CD8-positive, alpha-beta T cell (primary cell): ENCODE measurements at regions of chr1 and their contacts with region 1.

Region 1: DNA sequence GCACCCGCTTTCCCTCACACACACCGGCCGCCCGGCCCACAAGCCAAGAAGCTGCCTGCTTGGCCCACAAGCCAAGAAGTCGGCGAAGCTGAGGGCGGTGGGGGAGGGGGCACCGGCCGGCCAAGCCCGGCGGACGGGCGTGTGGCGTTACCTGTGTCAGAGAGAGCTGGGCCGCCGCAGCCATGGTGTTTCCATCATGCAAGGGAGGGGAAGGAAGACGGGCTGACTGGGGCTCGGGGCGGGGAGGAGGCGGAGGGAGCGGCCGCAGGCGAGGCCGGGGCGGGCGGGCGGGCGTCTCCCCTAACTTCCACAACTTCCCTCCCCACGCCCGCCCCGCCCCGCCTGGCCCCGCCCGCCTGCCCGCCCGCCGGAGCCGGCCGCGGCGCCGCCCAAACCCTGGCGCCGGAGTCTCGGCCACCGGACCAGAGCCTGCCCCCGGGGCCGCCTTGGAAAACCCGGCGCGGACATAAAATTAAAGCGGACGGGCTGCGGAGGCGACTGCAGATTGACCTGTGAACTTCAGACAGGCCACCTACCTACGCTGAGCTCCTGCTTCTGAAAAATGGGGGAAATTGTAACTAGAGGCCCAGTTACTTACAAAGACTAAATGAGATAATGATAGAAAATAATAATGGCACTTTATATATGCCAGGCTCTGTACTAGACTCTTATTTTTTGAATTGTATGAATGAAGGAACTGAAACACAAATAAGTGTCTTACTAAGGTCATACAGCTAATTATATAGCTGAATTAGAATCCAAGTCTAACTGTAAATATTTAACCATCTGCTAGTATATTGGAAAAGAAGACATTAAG is at the start of gene EPS15:
- DNase-seq: peak; percentile 70 to 90 (median 83)
- ATAC-seq: peak; percentile 65
- H3K4me3 ChIP-seq: peak within 1 kb of the TSS; percentile 76 to 82
- H3K4me3 Mint-ChIP-seq: peak within 1 kb of the TSS; percentile 94
- H3K27ac ChIP-seq: peak within 1 kb of the TSS; percentile 47 to 81
- H3K27ac Mint-ChIP-seq: peak within 1 kb of the TSS; percentile 93
- H3K4me1 ChIP-seq: peaks cover 38% of the 10 kb centered on the region
- H3K4me1 Mint-ChIP-seq: peaks cover 57% of the 10 kb centered on the region
- H3K27me3 ChIP-seq: no peaks in the 10 kb centered on the region
- H3K27me3 Mint-ChIP-seq: no peaks in the 10 kb centered on the region
- CTCF ChIP-seq: no peak
- total RNA-seq, gene EPS15: 49.9 to 52.2 TPM

Region 2: GRCh38 chr1:51235673-51236530 is 283.4 kb before region 1 on chr1 and contains the start of gene RNF11:
- CTCF ChIA-PET with region 1: no interaction called
- POLR2A ChIA-PET with region 1: no interaction called
- intact Hi-C with region 1: loop called (anchors 5 to 10 kb)
- DNase-seq: peak; percentile 86 to 97 (median 91)
- ATAC-seq: peak; percentile 92
- H3K4me3 ChIP-seq: peak within 1 kb of the TSS; percentile 79 to 90
- H3K4me3 Mint-ChIP-seq: peak within 1 kb of the TSS; percentile 98
- H3K27ac ChIP-seq: peak within 1 kb of the TSS; percentile 80 to 92
- H3K27ac Mint-ChIP-seq: peak within 1 kb of the TSS; percentile 99
- H3K4me1 ChIP-seq: peaks cover 37% of the 10 kb centered on the region
- H3K4me1 Mint-ChIP-seq: peaks cover 33% of the 10 kb centered on the region
- H3K27me3 ChIP-seq: no peaks in the 10 kb centered on the region
- H3K27me3 Mint-ChIP-seq: no peaks in the 10 kb centered on the region
- CTCF ChIP-seq: no peak
- total RNA-seq, gene RNF11: 95.9 to 103 TPM

Region 3: DNA sequence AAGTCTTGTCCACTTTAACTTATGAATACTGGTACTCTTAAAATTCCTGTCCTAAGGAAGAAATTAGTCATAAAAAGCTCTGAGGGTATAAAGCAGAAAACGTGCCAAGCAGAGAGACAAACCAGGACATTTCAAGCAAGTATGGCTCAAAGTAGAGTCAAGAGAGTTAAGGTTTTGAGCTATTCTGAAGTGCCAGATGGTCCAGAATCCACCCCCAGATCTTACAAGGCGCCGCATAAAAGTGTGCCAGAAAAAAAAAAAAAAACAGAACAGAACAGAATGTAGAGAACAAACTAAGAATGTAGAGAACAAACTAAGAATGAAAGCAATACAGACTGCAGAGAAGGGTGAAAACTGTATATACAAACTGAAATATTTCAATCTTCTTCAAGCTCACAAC is 12.7 kb before region 1 on chr1:
- CTCF ChIA-PET with region 1: no interaction called
- POLR2A ChIA-PET with region 1: interaction called, 3 read pairs
- intact Hi-C with region 1: loop called in 1 of 2 experiments (anchors 2 kb)
- DNase-seq: peak in 1 of 9 experiments; percentile 35
- ATAC-seq: peak; percentile 49
- H3K4me3 ChIP-seq: no peak overlapping the region
- H3K4me3 Mint-ChIP-seq: no peak overlapping the region
- H3K27ac ChIP-seq: no peak overlapping the region
- H3K27ac Mint-ChIP-seq: no peak overlapping the region
- H3K4me1 ChIP-seq: peaks cover 15% of the 10 kb centered on the region
- H3K4me1 Mint-ChIP-seq: peaks cover 58% of the 10 kb centered on the region
- H3K27me3 ChIP-seq: no peaks in the 10 kb centered on the region
- H3K27me3 Mint-ChIP-seq: no peaks in the 10 kb centered on the region
- CTCF ChIP-seq: no peak

Region 4: GRCh38 chr1:51616901-51617708 is 97.8 kb after region 1 on chr1 and contains the start of gene OSBPL9:
- CTCF ChIA-PET with region 1: no interaction called
- POLR2A ChIA-PET with region 1: no interaction called
- intact Hi-C with region 1: loop called (anchors 1 to 2 kb)
- DNase-seq: peak; percentile 78 to 94 (median 87)
- ATAC-seq: peak; percentile 93
- H3K4me3 ChIP-seq: peak within 1 kb of the TSS; percentile 90 to 98
- H3K4me3 Mint-ChIP-seq: peak within 1 kb of the TSS; percentile 100
- H3K27ac ChIP-seq: peak within 1 kb of the TSS; percentile 84
- H3K27ac Mint-ChIP-seq: peak within 1 kb of the TSS; percentile 99
- H3K4me1 ChIP-seq: peaks cover 23% of the 10 kb centered on the region
- H3K4me1 Mint-ChIP-seq: peaks cover 42% of the 10 kb centered on the region
- H3K27me3 ChIP-seq: no peaks in the 10 kb centered on the region
- H3K27me3 Mint-ChIP-seq: peaks cover under 1% of the 10 kb centered on the region
- CTCF ChIP-seq: no peak
- total RNA-seq, gene OSBPL9: 48.5 to 49.2 TPM

Region 5: DNA sequence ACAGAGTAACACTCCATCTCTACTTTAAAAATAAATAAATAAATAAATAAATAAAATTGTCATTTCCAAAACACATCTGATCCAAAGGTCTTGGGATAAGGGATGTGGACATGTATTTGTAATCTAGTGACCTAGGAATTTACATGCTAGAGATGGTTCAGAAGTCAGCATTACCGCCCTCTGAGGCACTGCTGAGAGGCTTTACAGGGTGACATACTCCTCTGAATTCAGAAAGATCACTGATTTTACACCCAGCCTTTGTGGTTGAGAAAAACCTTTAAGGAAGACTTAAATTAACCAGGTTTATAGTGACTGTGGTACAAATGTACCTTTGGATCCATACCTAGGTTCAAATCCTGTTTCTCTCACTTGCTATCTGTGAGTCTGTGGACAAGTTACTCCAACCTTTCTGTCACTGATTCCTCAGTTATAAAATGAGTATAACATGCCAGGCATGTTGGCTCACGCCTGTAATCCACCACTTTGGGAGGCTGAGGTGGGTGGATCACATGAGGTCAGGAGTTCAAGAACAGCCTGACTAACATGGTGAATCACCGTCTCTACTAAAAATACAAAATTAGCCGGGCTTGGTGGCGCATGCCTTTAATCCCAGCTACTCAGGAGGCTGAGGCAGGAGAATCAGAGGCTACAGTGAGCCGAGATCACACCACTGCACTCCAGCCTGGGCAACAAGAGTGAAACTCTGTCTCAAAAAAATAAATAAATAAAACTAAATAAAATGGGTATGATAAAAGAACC is 117.7 kb after region 1 on chr1:
- CTCF ChIA-PET with region 1: no interaction called
- POLR2A ChIA-PET with region 1: no interaction called
- intact Hi-C with region 1: no loop called
- DNase-seq: no peak
- ATAC-seq: no peak
- H3K4me3 ChIP-seq: no peak overlapping the region
- H3K4me3 Mint-ChIP-seq: no peak overlapping the region
- H3K27ac ChIP-seq: no peak overlapping the region
- H3K27ac Mint-ChIP-seq: no peak overlapping the region
- H3K4me1 ChIP-seq: no peaks in the 10 kb centered on the region
- H3K4me1 Mint-ChIP-seq: peaks cover 24% of the 10 kb centered on the region
- H3K27me3 ChIP-seq: no peaks in the 10 kb centered on the region
- H3K27me3 Mint-ChIP-seq: no peaks in the 10 kb centered on the region
- CTCF ChIP-seq: no peak

Region 6: DNA sequence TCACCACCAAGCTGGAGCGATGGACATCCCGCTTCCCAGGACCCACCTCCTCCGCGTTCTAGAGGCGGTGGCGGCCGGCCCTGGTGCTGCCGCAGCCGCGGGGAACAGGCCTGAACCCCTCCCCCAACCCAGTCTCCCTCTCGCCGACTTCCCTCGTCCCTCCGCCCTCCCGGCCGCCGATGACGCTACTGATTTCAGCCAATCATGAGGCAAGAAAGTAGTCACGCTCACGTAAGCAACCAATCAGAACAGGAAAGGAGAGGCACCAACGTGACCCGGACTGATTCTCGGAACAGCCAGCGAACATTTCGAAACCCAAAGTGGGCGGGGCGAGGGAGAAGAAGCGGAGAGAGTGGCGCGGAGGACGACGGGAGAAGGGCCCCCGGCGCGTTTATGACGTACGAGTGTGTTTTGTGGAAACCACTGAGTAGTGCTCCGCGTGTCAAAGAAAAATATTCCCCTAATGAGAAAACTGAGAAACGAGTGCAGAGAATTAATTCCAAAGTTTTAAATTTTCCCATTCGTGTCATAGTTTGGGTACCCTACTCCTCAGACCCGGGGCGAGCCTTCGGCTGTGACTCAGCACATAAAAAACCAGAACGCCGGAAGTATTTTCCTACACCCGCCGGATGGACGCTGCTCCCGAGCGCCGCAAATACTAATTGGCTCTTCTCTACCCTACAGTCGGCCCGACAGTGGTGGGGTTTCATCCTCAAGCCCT is 359.5 kb after region 1 on chr1 and contains the start of gene NRDC:
- CTCF ChIA-PET with region 1: no interaction called
- POLR2A ChIA-PET with region 1: no interaction called
- intact Hi-C with region 1: loop called (anchors 2 to 5 kb)
- DNase-seq: peak; percentile 99 to 100 (median 99)
- ATAC-seq: peak; percentile 89
- H3K4me3 ChIP-seq: peak within 1 kb of the TSS; percentile 90 to 99
- H3K4me3 Mint-ChIP-seq: no peak within 1 kb of the TSS
- H3K27ac ChIP-seq: peak within 1 kb of the TSS; percentile 89 to 97
- H3K27ac Mint-ChIP-seq: no peak within 1 kb of the TSS
- H3K4me1 ChIP-seq: peaks cover 30% of the 10 kb centered on the region
- H3K4me1 Mint-ChIP-seq: peaks cover 26% of the 10 kb centered on the region
- H3K27me3 ChIP-seq: peaks cover 0 to 2% of the 10 kb centered on the region in 2 experiments
- H3K27me3 Mint-ChIP-seq: peaks cover 13% of the 10 kb centered on the region
- CTCF ChIP-seq: no peak
- total RNA-seq, gene NRDC: 47.6 to 54.3 TPM

Region 7: GRCh38 chr1:52636721-52637695 is 1117.8 kb after region 1 on chr1:
- CTCF ChIA-PET with region 1: no interaction called
- POLR2A ChIA-PET with region 1: no interaction called
- intact Hi-C with region 1: loop called in 1 of 2 experiments (anchors 5 kb)
- DNase-seq: peak; percentile 44 to 91 (median 78)
- ATAC-seq: peak; percentile 60
- H3K4me3 ChIP-seq: peak overlapping the region; percentile 27 to 31
- H3K4me3 Mint-ChIP-seq: peak overlapping the region; percentile 77
- H3K27ac ChIP-seq: peak overlapping the region; percentile 89 to 99
- H3K27ac Mint-ChIP-seq: peak overlapping the region; percentile 99
- H3K4me1 ChIP-seq: peaks cover 83% of the 10 kb centered on the region
- H3K4me1 Mint-ChIP-seq: peaks cover 80% of the 10 kb centered on the region
- H3K27me3 ChIP-seq: no peaks in the 10 kb centered on the region
- H3K27me3 Mint-ChIP-seq: no peaks in the 10 kb centered on the region
- CTCF ChIP-seq: no peak